ENCODE measurements at regions of chr21 and their contacts with region 1.

Region 1: DNA sequence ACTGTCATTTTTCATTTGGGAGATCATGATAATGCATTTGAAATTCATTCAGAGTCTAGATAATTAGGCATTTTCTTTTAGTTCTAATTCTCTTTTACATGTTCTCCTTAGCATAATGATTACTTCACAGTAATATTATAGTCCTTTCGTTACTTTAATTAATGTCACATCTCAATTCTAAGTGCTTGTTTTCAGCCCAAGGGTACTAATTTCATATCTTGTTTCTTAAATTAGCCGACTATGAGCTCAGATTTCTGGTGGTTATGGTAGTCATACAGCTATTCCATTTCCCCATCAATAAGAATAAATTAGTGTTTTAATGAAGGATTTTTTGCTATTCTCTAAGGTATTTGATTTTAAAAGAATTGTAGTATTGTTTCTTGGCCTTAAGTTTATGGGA is 120.9 kb downstream of the NCAM2 start:
- DNase-seq: no peak
- H3K4me3 ChIP-seq: no peak overlapping the region
- H3K27ac ChIP-seq: no peak overlapping the region
- H3K27me3 ChIP-seq: no peaks in the 10 kb centered on the region
- CTCF ChIP-seq: no peak

Region 2: GRCh38 chr21:21029164-21029563 is 89.9 kb before region 1 on chr21:
- CTCF ChIA-PET with region 1: interaction called, 12 read pairs
- POLR2A ChIA-PET with region 1: no interaction called
- DNase-seq: no peak
- H3K4me3 ChIP-seq: no peak overlapping the region
- H3K27ac ChIP-seq: no peak overlapping the region
- H3K27me3 ChIP-seq: no peaks in the 10 kb centered on the region
- CTCF ChIP-seq: no peak

Region 3: GRCh38 chr21:21341041-21341440 is 221.9 kb after region 1 on chr21:
- CTCF ChIA-PET with region 1: no interaction called
- POLR2A ChIA-PET with region 1: no interaction called
- DNase-seq: no peak
- H3K4me3 ChIP-seq: no peak overlapping the region
- H3K27ac ChIP-seq: no peak overlapping the region
- H3K27me3 ChIP-seq: no peaks in the 10 kb centered on the region
- CTCF ChIP-seq: no peak

Region 4: GRCh38 chr21:21921421-21922232 is 802.5 kb after region 1 on chr21:
- CTCF ChIA-PET with region 1: no interaction called
- POLR2A ChIA-PET with region 1: no interaction called
- DNase-seq: no peak
- H3K4me3 ChIP-seq: no peak overlapping the region
- H3K27ac ChIP-seq: no peak overlapping the region
- H3K27me3 ChIP-seq: no peaks in the 10 kb centered on the region
- CTCF ChIP-seq: peak; percentile 63